ENCODE measurements at regions of chr13 and their contacts with region 1.

Region 1: DNA sequence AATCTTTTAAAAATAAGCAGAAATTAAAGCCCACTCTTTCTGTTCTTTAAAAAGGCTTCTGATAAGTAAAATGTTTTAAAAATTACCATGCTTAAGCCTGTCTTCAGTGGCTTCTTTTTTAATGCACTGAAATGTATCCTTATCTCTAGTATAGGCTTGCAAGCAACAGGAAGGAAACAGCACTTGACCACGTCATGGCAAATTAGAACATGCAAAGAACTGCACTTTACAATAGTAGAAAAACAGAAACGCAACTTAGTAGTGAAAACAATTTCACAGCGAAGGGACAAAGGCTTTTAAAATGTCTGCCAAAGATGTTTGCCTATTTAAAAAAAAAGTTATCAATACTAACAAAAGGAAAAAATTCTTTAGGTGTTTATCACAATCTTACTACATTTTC is 36.3 kb downstream of the ELF1 start:
- DNase-seq: peak; percentile 62
- H3K4me3 Mint-ChIP-seq: peak overlapping the region; percentile 91
- H3K27ac Mint-ChIP-seq: peak overlapping the region; percentile 90
- H3K4me1 Mint-ChIP-seq: peaks cover 79% of the 10 kb centered on the region
- H3K27me3 Mint-ChIP-seq: no peaks in the 10 kb centered on the region

Region 2: GRCh38 chr13:40770934-40771618 is 211.7 kb before region 1 on chr13 and contains the start of gene MRPS31:
- intact Hi-C with region 1: loop called (anchors 2 kb)
- DNase-seq: peak; percentile 93
- H3K4me3 Mint-ChIP-seq: peak within 1 kb of the TSS; percentile 99
- H3K27ac Mint-ChIP-seq: peak within 1 kb of the TSS; percentile 98
- H3K4me1 Mint-ChIP-seq: peaks cover 29% of the 10 kb centered on the region
- H3K27me3 Mint-ChIP-seq: no peaks in the 10 kb centered on the region
- total RNA-seq, gene MRPS31: 41.6 and 42.6 TPM in 2 replicates

Region 3: GRCh38 chr13:40969169-40969901 is 13.4 kb before region 1 on chr13:
- intact Hi-C with region 1: loop called (anchors 1 kb)
- DNase-seq: no peak
- H3K4me3 Mint-ChIP-seq: no peak overlapping the region
- H3K27ac Mint-ChIP-seq: peak overlapping the region; percentile 14
- H3K4me1 Mint-ChIP-seq: peaks cover 74% of the 10 kb centered on the region
- H3K27me3 Mint-ChIP-seq: no peaks in the 10 kb centered on the region

Region 4: GRCh38 chr13:41004875-41005693 is 22.3 kb after region 1 on chr13:
- intact Hi-C with region 1: loop called (anchors 1 kb)
- DNase-seq: no peak
- H3K4me3 Mint-ChIP-seq: peak overlapping the region; percentile 59
- H3K27ac Mint-ChIP-seq: peak overlapping the region; percentile 88
- H3K4me1 Mint-ChIP-seq: peaks cover 66% of the 10 kb centered on the region
- H3K27me3 Mint-ChIP-seq: no peaks in the 10 kb centered on the region

Region 5: DNA sequence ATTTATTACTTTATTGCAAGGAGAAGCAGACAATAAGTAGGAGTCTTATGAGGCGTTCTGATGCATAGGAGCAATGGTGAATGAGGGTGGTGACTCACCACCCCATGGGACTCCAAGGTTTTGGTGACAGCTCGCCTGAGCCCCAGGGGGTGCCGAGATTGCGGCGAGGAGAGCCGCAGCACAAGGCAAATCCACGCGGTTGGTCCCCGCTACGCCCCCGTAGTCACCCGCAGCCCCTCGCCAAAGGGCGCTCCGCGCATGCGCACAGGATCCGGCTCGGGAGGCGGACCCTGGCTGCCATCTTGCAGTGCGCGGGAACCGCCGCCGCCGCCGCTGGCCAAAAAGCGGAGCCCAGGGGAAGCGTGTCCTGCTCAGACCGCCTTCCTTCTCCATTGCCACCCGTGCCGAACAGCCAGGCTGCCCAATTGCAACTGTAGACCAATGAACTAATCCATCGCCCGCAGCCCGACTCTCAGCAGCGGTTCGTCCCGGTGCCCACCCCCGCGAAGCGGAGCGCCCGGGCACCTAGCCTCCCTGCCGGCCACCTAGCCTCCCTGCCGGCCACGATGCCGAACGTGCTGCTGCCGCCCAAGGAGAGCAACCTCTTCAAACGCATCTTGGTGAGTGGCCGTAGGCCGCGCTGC is 328.3 kb after region 1 on chr13 and contains the start of gene NAA16:
- intact Hi-C with region 1: loop called (anchors 5 kb)
- DNase-seq: peak; percentile 92
- H3K4me3 Mint-ChIP-seq: peak within 1 kb of the TSS; percentile 94
- H3K27ac Mint-ChIP-seq: peak within 1 kb of the TSS; percentile 83
- H3K4me1 Mint-ChIP-seq: peaks cover 38% of the 10 kb centered on the region
- H3K27me3 Mint-ChIP-seq: peaks cover 2% of the 10 kb centered on the region
- total RNA-seq, gene NAA16: 31.9 and 33.4 TPM in 2 replicates